ENCODE measurements at regions of chr1 and their contacts with region 1.

Region 1: DNA sequence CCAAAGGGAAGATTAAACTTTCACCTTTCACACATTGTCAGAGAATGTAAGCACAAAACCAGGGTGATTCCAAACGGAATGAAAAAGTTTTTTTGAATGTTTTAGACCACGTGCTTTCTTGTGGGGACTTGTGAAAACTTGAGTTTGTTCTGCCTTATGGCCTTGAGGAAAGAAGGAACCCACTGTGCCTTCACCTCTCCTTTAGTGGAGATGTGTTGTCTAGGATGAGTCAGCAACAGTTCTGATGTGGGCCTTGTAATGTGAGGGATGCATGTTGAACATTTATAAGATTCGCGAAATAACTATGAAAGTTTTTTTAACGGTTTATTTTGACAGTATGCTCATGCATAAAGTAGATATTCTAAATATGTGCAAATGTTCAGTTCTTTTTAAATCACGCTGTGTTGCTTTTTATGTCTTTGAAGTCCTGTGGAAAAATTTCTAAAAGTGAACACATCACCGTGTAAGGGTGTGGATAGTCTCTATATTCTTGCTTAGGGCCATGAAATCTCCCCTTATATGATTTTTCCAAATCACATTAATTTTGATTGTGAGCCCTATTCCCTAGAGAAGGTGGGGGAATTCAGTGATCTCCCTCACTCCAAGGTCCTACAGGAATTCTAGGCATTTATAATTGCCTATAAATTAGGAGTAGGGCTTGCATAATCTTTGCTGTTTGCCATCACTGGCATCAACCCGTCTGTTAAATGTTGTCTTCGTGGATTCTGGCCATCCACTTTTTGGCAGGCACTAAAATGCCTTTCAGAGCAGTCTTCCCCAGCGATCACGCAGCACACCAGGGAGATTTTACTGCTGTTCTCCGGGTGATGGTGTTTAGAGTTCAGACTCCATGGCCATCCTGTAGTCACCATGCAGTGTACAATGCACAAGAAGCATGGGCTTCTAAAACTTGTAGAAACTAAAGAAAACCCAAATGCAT is 47.4 kb downstream of the PLA2G4A start:
- DNase-seq: peak; percentile 86
- H3K4me3 ChIP-seq: no peak overlapping the region
- H3K27ac ChIP-seq: peak overlapping the region in 3 of 4 donors; percentile 76 to 81 (median 81)
- H3K4me1 ChIP-seq: peaks cover 0 to 90% (median 56%) of the 10 kb centered on the region in 4 donors
- H3K27me3 ChIP-seq: no peaks in the 10 kb centered on the region
- CTCF ChIP-seq: no peak
- EP300 ChIP-seq: peak in 2 of 4 donors; percentile 32 to 63
- POLR2A ChIP-seq: no peak

Region 2: GRCh38 chr1:186626356-186626932 is 249.7 kb before region 1 on chr1:
- intact Hi-C with region 1: loop called (anchors 5 kb)
- DNase-seq: no peak
- H3K4me3 ChIP-seq: peak overlapping the region in 2 of 4 donors; percentile 11 to 26
- H3K27ac ChIP-seq: peak overlapping the region; percentile 6 to 84 (median 76)
- H3K4me1 ChIP-seq: peaks cover 0 to 45% (median 30%) of the 10 kb centered on the region in 4 donors
- H3K27me3 ChIP-seq: no peaks in the 10 kb centered on the region
- CTCF ChIP-seq: no peak
- EP300 ChIP-seq: no peak
- POLR2A ChIP-seq: no peak

Region 3: DNA sequence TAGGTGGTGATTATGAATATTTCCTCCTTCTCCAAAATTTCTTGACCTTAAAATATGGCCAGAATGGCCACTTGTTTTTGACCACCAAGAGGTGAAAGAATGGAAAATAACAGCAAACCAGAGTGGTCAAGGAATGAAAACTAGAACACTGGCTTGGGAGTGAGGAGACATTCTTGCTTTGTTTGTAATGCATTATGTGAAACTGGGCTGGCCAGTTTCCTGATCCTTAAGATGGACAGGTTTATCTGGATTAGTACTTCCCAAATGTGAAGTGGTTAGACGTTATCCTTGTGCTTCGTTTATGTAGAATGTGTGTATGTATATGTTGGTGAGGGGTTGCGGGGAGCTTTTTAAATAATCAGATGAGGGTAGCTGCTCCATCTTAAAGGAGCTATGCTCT is 34.6 kb before region 1 on chr1:
- intact Hi-C with region 1: loop called (anchors 5 kb)
- DNase-seq: no peak
- H3K4me3 ChIP-seq: no peak overlapping the region
- H3K27ac ChIP-seq: peak overlapping the region in 2 of 4 donors; percentile 59 to 61
- H3K4me1 ChIP-seq: peaks cover 0 to 67% (median 42%) of the 10 kb centered on the region in 4 donors
- H3K27me3 ChIP-seq: no peaks in the 10 kb centered on the region
- CTCF ChIP-seq: no peak
- EP300 ChIP-seq: no peak
- POLR2A ChIP-seq: no peak